ENCODE measurements at regions of chr22 and their contacts with region 1.

Region 1: DNA sequence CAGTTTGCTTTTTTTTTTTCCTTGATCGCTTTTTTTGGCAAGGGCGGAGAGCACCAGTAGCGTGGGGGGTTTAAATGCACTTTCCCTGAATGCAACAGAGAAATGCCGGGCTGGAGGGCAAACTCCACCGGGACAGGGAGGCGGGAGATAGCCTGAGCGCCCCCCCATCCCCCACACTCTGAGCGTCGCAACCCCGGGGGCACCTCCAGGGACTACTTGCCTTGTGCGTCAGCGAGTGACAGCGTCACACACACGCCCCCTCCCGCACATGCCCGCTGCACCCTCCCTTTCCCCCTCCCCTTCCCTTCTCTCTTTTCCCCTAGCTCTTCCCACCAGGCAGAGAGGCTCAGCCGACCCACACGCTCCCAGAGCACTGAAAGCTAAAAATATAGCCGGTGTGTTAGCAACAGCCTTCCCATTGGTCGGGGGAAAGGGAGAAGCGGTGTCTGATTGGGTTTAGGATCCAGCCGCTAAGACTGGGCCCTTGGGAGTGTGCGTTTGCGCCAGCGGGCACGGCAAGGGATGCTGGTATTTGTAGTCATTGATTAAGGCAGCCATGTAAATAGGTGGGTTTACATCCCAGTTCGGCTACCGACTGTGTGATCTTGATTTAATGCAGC is 1.7 kb upstream of the TOB2 start:
- DNase-seq: peak; percentile 97
- H3K4me3 ChIP-seq: peak overlapping the region; percentile 89
- H3K27ac ChIP-seq: peak overlapping the region; percentile 99
- H3K4me1 ChIP-seq: no peaks in the 10 kb centered on the region
- H3K27me3 ChIP-seq: no peaks in the 10 kb centered on the region
- CTCF ChIP-seq: no peak

Region 2: DNA sequence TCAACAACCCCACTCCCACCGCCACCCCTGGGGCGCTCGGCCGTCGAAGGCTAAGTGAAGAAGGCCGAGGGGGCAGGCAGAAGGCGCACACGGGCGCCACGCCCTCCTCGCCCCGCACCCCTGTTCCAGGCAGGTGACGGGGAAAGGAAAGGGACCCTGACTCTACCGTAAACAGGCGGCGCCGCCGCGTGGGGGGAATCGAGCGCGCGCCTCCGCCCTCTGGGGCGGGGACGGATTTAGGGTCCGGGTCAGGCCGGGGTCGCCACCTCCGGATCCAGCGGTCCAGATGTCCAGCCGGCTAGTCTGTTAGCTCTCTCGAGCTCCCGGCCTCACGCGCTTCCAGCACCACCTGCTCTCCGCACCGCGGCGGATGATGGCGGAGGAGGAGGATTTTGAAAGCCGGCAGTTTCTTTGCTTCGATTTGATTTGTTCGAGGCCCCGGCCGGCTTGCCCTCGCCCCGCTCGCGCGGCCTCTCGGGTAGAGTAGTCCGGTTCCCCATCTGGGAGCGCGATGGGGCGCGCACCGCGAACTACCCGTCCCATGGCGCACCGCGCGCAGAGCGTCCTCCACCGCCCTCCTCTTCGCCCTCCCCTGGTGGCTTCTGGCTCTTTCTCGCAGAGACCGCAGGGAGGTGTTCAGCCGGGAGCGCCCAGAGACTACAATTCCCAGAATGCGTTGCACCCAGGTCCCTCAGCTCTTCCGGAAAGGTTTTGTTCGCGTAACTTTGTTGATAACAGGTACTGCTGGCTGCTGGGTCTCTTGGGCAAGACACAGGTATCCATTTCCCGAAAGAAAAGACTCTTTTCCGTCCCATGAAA is 162.3 kb before region 1 on chr22 and contains the start of gene RANGAP1:
- intact Hi-C with region 1: loop called (anchors 5 kb)
- DNase-seq: peak; percentile 99
- H3K4me3 ChIP-seq: peak within 1 kb of the TSS; percentile 93
- H3K27ac ChIP-seq: peak within 1 kb of the TSS; percentile 88
- H3K4me1 ChIP-seq: peaks cover 4% of the 10 kb centered on the region
- H3K27me3 ChIP-seq: no peaks in the 10 kb centered on the region
- CTCF ChIP-seq: no peak
- total RNA-seq, gene RANGAP1: 35.5 to 124 TPM

Region 3: DNA sequence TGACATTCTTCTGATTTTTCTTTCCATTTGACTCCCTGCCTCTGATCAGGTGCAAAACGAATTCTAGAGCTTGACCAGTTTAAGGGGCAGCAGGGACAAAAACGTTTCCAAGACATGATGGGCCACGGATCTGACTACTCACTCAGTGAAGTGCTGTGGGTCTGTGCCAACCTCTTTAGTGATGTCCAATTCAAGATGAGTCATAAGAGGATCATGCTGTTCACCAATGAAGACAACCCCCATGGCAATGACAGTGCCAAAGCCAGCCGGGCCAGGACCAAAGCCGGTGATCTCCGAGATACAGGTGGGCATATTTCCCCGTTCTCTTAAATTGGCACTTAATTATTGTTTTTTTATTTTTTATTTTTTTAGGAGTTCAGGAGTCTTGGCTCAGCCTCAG is 188.2 kb after region 1 on chr22:
- intact Hi-C with region 1: no loop called
- DNase-seq: no peak
- H3K4me3 ChIP-seq: no peak overlapping the region
- H3K27ac ChIP-seq: no peak overlapping the region
- H3K4me1 ChIP-seq: no peaks in the 10 kb centered on the region
- H3K27me3 ChIP-seq: no peaks in the 10 kb centered on the region
- CTCF ChIP-seq: no peak